Panc1 (cell line): ENCODE measurements at regions of chrX and their contacts with region 1.

Region 1: GRCh38 chrX:145190801-145191389 is 56.4 kb upstream of the SPANXN1 start:
- DNase-seq: no peak
- ATAC-seq: no peak
- H3K4me3 ChIP-seq: no peak overlapping the region
- H3K27ac ChIP-seq: no peak overlapping the region
- H3K4me1 ChIP-seq: no peaks in the 10 kb centered on the region
- H3K27me3 ChIP-seq: no peaks in the 10 kb centered on the region
- CTCF ChIP-seq: peak; percentile 52; the same call in 1 of the 2 replicates

Region 2: GRCh38 chrX:143669395-143669794 is 1521.5 kb before region 1 on chrX:
- CTCF ChIA-PET with region 1: no interaction called
- POLR2A ChIA-PET with region 1: no interaction called
- in situ Hi-C with region 1: no loop called
- intact Hi-C with region 1: loop called (anchors 5 kb)
- DNase-seq: no peak
- ATAC-seq: peak; percentile 34; the same call in 1 of the 2 replicates
- H3K4me3 ChIP-seq: no peak overlapping the region
- H3K27ac ChIP-seq: no peak overlapping the region
- H3K4me1 ChIP-seq: no peaks in the 10 kb centered on the region
- H3K27me3 ChIP-seq: no peaks in the 10 kb centered on the region
- CTCF ChIP-seq: peak; percentile 48

Region 3: GRCh38 chrX:145410622-145411021 is 219.7 kb after region 1 on chrX:
- CTCF ChIA-PET with region 1: no interaction called
- POLR2A ChIA-PET with region 1: no interaction called
- in situ Hi-C with region 1: no loop called
- intact Hi-C with region 1: no loop called
- DNase-seq: no peak
- ATAC-seq: no peak
- H3K4me3 ChIP-seq: no peak overlapping the region
- H3K27ac ChIP-seq: no peak overlapping the region
- H3K4me1 ChIP-seq: no peaks in the 10 kb centered on the region
- H3K27me3 ChIP-seq: no peaks in the 10 kb centered on the region
- CTCF ChIP-seq: no peak